Left ventricle myocardium superior (tissue), 1 donor: ENCODE measurements at regions of chr1 and their contacts with region 1.

Region 1: GRCh38 chr1:20493839-20494608 is 8.0 kb upstream of the CAMK2N1 start:
- DNase-seq: peak; percentile 90
- ATAC-seq: peak; percentile 93

Region 2: DNA sequence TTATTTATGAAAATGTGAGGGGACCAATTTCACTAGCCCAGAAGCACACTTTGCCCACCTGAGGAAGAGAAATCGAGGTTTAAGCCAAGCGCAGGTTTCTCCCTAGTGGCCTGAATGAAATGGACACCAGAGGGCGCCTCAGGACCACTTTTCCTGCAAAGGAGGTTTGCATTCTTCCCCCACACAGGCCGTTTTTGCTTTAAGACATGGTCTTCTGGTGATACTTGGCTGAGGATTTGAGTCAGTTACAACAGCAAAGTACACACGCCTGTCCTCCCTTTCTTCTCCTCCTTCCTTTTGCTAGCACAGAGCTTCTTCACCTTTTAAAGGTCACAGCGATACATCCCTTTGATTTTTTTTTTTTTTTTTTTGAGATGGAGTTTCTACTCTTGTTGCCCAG is 576.0 kb before region 1 on chr1:
- intact Hi-C with region 1: loop called (anchors 10 kb)
- DNase-seq: peak; percentile 84
- ATAC-seq: peak; percentile 83

Region 3: GRCh38 chr1:20216574-20216973 is 277.4 kb before region 1 on chr1:
- intact Hi-C with region 1: loop called (anchors 5 kb)
- DNase-seq: no peak
- ATAC-seq: peak; percentile 24

Region 4: DNA sequence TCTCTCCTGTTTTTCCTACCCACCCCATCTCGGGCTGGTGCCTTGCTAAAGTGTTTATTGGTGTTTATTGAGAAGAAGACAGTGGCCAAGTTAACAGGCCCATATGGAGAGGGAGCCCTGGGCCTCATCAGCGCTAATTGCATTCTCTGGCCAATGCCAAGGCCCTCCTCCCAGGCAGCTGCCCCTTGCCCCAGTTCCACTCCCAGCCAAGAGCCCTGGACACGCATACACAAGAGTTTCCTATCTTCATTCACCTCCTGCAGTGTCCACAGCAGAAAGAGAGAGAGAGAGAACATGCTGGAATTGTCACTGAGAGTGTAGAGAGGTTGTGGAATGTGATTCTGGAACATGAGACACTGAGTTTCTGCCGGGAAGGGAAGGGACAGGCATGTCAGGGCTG is 228.8 kb before region 1 on chr1:
- intact Hi-C with region 1: no loop called
- DNase-seq: peak; percentile 68
- ATAC-seq: peak; percentile 97

Region 5: DNA sequence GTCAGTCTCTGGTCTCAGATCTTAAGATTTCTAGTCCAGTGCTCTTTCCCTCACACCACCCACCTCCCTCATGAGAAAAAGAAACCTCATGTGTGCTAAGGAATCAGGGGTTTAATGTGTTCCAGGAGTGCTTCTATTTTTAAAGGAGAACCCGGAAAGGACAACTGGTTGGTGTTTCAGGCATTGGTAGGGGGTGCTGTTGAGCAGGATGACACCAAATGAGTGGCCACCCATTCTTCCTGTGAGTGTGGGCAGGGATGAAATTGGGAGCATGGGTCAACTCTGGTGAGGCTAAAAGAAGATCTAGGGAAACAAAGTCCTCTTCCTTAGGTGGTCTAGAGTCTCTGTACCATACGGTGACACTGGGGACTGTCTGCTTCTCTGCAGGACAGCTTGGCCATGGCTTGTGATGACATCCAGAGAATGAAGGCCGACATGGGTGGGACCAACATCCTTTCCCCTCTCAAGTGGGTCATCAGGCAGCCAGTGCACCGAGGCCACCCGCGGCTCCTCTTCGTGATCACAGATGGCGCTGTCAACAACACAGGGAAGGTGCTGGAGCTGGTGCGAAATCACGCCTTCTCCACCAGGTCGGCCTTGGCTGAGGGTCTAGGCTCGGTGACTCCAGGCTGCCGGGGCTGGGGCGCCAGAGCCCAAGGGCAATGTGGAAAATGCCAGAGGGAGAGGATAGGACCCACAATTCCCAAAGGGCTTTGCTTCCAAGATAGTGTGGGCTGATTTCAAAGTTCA is 164.1 kb before region 1 on chr1:
- intact Hi-C with region 1: no loop called
- DNase-seq: no peak
- ATAC-seq: no peak

Region 6: DNA sequence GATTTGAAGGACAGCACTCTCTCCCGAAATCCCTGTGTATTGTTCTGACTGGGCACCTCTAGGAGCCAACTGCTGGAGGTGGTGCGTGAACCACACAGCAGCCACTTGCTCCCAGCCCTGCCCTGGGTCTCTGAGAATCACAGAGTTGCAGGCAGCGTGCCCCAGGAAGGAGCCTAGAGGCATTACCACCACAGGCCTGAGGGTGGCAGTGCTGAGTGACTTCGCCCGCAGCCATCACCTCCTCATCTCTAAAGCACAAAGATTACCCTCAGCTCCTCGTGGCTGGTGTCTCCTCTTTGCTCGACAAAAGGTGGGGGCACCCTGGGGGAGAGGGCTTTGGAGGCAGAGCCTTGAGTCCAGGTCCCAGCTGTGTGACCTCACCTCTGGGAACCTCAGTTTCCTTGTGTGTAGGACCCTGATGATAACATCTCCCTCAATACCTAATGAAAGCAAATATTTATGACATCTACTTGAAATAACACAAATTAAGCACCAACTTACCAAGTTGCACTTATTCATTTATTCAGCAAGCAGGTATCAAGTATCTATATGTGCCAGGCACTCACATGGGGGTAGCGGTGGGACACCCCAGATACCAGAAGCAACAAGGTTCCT is 117.0 kb before region 1 on chr1:
- intact Hi-C with region 1: loop called (anchors 10 kb)
- DNase-seq: peak; percentile 60
- ATAC-seq: peak; percentile 62

Region 7: GRCh38 chr1:20753589-20753988 is 259.6 kb after region 1 on chr1:
- intact Hi-C with region 1: no loop called
- DNase-seq: no peak
- ATAC-seq: no peak